ENCODE measurements at regions of chr1 and their contacts with region 1.

Region 1: DNA sequence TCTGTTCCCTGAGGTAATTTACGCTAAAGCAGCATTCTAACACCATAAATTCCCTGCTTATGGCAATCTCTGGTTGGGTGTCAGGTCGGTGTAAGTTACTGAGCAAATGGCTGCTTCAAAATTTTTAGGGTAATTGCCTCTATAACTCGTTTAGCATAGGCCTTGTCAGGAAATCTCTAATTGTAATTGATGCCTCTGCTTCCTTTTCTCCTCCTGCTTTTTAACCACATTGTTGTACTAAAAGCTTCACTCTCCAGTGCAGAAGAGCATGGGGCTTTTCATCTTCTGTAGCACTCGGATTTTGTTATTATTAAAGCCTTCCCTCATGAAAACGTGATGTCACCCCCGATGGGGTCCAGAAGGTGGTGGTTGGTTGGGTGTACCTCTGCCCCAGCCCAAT is 141.6 kb upstream of the NBPF11 start:
- DNase-seq: no peak

Region 2: DNA sequence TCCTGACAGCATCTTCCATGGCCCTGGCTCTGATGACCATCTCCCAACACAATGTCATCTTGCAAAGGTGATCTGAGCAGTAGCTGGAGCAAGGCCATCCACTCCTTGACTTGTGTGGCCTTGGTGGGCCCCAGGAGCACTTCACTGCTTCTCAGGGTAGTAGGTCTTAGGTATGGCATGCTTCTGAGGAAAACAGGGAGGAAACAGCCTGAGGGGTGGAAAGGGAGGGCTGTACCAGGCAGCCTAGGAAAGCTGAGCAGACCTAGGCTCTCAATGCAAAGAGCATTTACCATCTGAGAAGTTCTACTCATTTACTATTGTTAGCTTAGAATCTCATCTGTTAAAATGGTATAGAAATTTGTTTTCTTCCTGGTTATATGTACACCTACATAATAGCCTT is 20.8 kb before region 1 on chr1:
- intact Hi-C with region 1: loop called in 1 of 2 experiments (anchors 2 kb)
- DNase-seq: no peak

Measured in posterior vena cava (tissue), 2 donors.